ENCODE measurements at regions of chr11 and their contacts with region 1.

Region 1: DNA sequence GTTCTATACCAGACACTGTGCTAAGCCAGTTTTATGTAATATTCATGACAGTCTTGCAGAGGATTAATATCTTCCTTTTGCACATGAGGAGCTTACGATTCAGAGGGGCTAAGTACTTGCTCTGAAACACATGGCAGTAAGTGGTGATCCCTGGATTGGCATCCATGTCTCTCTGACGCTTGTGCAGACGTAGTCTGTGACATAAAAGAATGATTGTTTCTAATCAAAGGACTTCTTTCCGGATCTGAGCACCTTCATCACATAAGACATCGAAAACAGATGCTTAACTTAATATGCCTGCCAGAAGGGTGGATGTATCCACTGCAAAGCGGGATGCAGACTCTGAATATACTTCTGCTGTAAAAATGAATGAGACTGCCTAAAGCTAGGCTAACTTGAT is 74.8 kb downstream of the ARHGAP42 start:
- DNase-seq: no peak
- H3K4me3 ChIP-seq: no peak overlapping the region
- CTCF ChIP-seq: no peak
- POLR2A ChIP-seq: no peak

Region 2: GRCh38 chr11:100592619-100593260 is 169.1 kb before region 1 on chr11:
- intact Hi-C with region 1: no loop called
- DNase-seq: no peak
- H3K4me3 ChIP-seq: no peak overlapping the region
- CTCF ChIP-seq: no peak
- POLR2A ChIP-seq: no peak

Region 3: DNA sequence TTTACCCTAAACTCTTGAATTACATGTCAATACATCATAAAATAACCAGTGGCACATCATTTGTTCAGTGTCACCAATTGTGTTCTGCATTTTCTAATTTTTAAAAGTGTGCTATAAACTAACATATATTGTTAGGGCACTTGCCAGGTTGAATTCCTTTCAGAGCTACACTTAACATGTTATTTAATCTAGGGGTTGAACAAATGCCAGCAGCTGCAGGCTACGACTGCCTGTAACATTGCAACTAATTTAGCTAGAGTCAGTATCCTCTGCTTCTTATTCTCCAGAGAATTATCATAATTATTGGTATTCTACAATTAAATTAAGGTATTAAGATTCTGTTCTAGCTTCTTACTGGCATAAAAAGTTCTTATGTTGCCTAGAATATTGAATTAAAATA is 121.2 kb before region 1 on chr11:
- intact Hi-C with region 1: no loop called
- DNase-seq: no peak
- H3K4me3 ChIP-seq: no peak overlapping the region
- CTCF ChIP-seq: no peak
- POLR2A ChIP-seq: no peak

Region 4: GRCh38 chr11:100789500-100789899 is 27.7 kb after region 1 on chr11:
- intact Hi-C with region 1: loop called (anchors 1 kb)
- DNase-seq: peak in 1 of 2 donors; percentile 60
- H3K4me3 ChIP-seq: no peak overlapping the region
- CTCF ChIP-seq: no peak
- POLR2A ChIP-seq: no peak

Measured in lower leg skin (tissue), 4 donors.